T-cell (primary cell): ENCODE measurements at regions of chr19 and their contacts with region 1.

Region 1: GRCh38 chr19:31353833-31354232 is 4.6 kb upstream of the TSHZ3 start:
- DNase-seq: no peak
- ATAC-seq: no peak
- H3K4me3 ChIP-seq: no peak overlapping the region
- H3K4me3 Mint-ChIP-seq: no peak overlapping the region
- H3K27ac ChIP-seq: no peak overlapping the region
- H3K27ac Mint-ChIP-seq: no peak overlapping the region
- H3K4me1 ChIP-seq: peaks cover 5 to 58% of the 10 kb centered on the region in 2 experiments
- H3K4me1 Mint-ChIP-seq: peaks cover 36 to 51% (median 46%) of the 10 kb centered on the region in 3 donors
- H3K27me3 ChIP-seq: peaks cover 34 to 77% of the 10 kb centered on the region in 2 experiments
- H3K27me3 Mint-ChIP-seq: peaks cover 61 to 75% of the 10 kb centered on the region in 2 donors

Region 2: GRCh38 chr19:33260628-33261418 is 1907.0 kb after region 1 on chr19:
- CTCF ChIA-PET with region 1: no interaction called
- POLR2A ChIA-PET with region 1: interaction called in 1 of 2 experiments, 11 read pairs
- DNase-seq: peak in 2 of 35 experiments; percentile 6 to 25
- ATAC-seq: peak in 1 of 4 experiments; percentile 40
- H3K4me3 ChIP-seq: no peak overlapping the region
- H3K4me3 Mint-ChIP-seq: no peak overlapping the region
- H3K27ac ChIP-seq: no peak overlapping the region
- H3K27ac Mint-ChIP-seq: no peak overlapping the region
- H3K4me1 ChIP-seq: peaks cover 0 to 15% of the 10 kb centered on the region in 2 experiments
- H3K4me1 Mint-ChIP-seq: peaks cover 7 to 20% (median 18%) of the 10 kb centered on the region in 3 donors
- H3K27me3 ChIP-seq: peaks cover 0 to 24% of the 10 kb centered on the region in 2 experiments
- H3K27me3 Mint-ChIP-seq: peaks cover 16 to 22% of the 10 kb centered on the region in 2 donors